Body of pancreas (tissue), 4 donors: ENCODE measurements at regions of chr6 and their contacts with region 1.

Region 1: DNA sequence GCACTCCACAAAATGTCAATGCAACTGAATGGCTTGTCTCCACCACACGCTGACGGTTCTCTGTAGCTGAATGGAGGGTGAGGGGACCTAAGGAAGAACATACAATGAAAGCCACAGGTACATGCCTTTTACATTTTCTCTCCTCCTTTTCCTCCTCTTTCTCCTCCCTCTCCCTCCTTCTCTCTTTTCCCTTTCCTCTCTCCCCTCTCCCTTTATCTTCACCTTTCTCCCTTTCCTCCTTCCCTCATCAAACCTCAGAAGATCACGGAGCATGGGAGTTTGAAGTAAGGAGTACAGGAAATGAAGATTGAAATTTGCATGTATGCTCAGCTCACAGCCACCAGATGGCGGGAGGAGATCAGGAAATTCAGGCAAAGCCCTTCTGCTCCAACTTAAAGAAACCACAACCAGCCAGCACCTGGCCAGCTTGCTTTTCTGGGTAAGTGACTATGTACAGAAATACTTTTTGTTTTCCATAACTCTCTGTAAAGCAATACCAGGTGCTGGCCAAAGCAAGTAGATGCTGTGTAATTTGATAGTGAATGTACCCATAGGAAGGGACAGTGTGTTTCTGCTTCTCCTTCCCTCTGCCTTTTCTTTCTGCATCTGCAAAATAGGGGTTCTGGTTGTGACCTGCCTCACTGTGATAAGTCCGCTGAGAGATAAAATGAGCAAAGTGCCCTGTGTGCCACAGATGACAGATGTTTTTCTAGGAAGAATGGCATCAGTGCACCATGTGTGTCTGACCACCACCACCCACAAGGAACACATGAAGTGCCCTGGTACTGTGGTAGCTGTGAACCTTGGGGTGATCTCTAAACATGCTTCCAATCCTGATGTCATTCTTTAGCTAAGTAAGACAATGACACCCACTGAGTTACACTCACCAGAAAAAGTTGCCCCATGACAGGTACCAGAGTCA is 18.6 kb upstream of the FOXO3 start:
- DNase-seq: peak; percentile 77 to 82 (median 80)
- ATAC-seq: peak; percentile 91
- H3K4me3 ChIP-seq: no peak overlapping the region
- H3K27ac ChIP-seq: no peak overlapping the region
- H3K4me1 ChIP-seq: peaks cover 11% of the 10 kb centered on the region
- H3K27me3 ChIP-seq: no peaks in the 10 kb centered on the region
- CTCF ChIP-seq: peak; percentile 48 to 97 (median 94)
- POLR2A ChIP-seq: no peak

Region 2: DNA sequence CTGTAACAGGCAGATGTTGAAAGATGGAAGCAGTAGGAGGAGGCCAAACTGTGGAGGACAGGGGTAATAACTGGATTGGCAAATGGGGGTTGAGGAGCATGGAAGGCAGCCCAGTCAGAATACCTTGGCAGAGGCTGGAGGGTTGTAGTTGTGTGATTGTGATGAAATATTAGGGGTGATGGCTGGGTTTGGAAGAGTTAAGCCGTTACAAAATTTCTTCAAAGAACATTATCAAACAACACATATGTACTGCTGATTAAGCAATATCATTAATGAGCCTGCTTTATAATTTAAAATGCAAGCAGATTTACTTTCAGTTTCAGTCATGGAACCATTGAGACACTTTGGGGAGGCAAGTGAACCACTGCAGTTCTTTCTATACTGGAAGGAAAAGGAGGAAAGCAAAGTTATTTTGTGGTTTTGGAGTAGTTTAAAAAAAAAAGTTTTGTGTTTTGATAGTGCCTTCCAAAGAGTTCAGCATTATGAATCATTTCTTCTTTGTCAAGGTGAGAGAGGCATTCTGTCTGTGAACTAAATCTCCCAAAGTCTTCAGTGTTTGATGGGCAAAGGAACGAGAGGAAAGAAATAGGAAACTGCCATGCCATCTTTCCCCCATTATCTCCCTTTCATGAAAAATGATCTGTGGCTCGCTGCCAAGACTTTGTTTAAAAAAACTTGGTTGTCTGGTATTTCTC is 39.3 kb after region 1 on chr6:
- intact Hi-C with region 1: no loop called
- DNase-seq: peak in 2 of 4 donors; percentile 26 to 42
- ATAC-seq: peak; percentile 49
- H3K4me3 ChIP-seq: no peak overlapping the region
- H3K27ac ChIP-seq: peak overlapping the region in 3 of 4 donors; percentile 11 to 65 (median 23)
- H3K4me1 ChIP-seq: peaks cover 98% of the 10 kb centered on the region
- H3K27me3 ChIP-seq: no peaks in the 10 kb centered on the region
- CTCF ChIP-seq: no peak
- POLR2A ChIP-seq: no peak

Region 3: GRCh38 chr6:108835218-108835850 is 293.2 kb after region 1 on chr6:
- intact Hi-C with region 1: loop called (anchors 2 kb)
- DNase-seq: peak; percentile 92 to 95 (median 94)
- ATAC-seq: peak; percentile 93
- H3K4me3 ChIP-seq: no peak overlapping the region
- H3K27ac ChIP-seq: no peak overlapping the region
- H3K4me1 ChIP-seq: peaks cover 12% of the 10 kb centered on the region
- H3K27me3 ChIP-seq: no peaks in the 10 kb centered on the region
- CTCF ChIP-seq: peak; percentile 75 to 98 (median 94)
- POLR2A ChIP-seq: no peak